HEK293 (cell line): ENCODE measurements at regions of chr4 and their contacts with region 1.

Region 1: GRCh38 chr4:139243448-139244365 is 36.3 kb downstream of the MGARP start:
- H3K4me3 ChIP-seq: no peak overlapping the region
- H3K27ac ChIP-seq: peak overlapping the region; percentile 37; the same call in 1 of the 2 replicates
- H3K4me1 ChIP-seq: no peaks in the 10 kb centered on the region; the same call in 1 of the 2 replicates
- CTCF ChIP-seq: no peak

Region 2: DNA sequence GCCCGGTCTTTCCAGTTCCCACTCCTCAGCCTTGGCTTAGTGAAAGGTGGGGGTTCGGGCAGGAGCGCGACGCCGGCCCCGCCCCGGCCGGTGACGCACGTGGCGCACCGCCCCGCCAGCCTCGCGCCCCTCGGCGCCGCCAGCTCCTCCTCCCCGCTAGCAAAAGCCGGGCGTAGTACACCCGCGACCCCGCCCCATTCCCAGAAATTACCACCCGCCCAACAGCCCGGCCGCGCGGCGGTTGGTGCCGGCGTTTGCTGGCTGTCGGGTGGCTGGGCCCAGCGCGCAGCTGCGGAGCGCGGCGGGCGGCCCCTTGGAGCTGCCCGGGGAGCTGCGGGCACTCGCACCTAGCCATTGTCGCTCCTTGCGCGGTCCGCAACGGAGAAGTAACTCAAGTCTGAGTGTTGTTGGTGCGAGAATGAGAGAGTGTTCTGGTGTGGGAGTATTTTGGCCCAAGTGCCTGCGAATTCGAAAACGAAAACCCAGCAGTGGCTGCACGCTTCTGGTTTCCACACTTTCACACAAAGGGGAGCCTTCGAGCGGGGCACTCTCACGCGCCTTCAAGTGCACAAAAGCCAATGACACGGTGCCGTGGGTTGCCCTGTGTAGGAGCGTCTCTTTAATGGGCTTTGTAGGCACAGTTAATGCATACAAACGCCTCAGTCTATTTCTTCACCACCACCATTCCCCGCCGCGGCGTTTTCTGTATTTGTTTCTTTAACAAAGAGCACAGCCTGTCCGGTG is 65.7 kb before region 1 on chr4:
- CTCF ChIA-PET with region 1: no interaction called
- POLR2A ChIA-PET with region 1: interaction called, 11 read pairs
- H3K4me3 ChIP-seq: peak overlapping the region; percentile 82
- H3K27ac ChIP-seq: peak overlapping the region; percentile 96
- H3K4me1 ChIP-seq: no peaks in the 10 kb centered on the region
- CTCF ChIP-seq: no peak